ENCODE measurements at regions of chr4 and their contacts with region 1.

Region 1: GRCh38 chr4:82373816-82374625 is at the start of gene HNRNPD:
- DNase-seq: peak; percentile 76 to 99 (median 91)
- ATAC-seq: peak; percentile 83
- H3K4me3 ChIP-seq: peak within 1 kb of the TSS; percentile 94 to 98
- H3K4me3 Mint-ChIP-seq: peak within 1 kb of the TSS; percentile 100
- H3K27ac ChIP-seq: peak within 1 kb of the TSS; percentile 87 to 99
- H3K27ac Mint-ChIP-seq: peak within 1 kb of the TSS; percentile 100
- H3K4me1 ChIP-seq: peaks cover 34% of the 10 kb centered on the region
- H3K4me1 Mint-ChIP-seq: peaks cover 51% of the 10 kb centered on the region
- H3K27me3 ChIP-seq: no peaks in the 10 kb centered on the region
- H3K27me3 Mint-ChIP-seq: no peaks in the 10 kb centered on the region
- CTCF ChIP-seq: no peak
- total RNA-seq, gene HNRNPD: 245 to 248 TPM

Region 2: GRCh38 chr4:81405894-81406401 is 968.1 kb before region 1 on chr4:
- CTCF ChIA-PET with region 1: no interaction called
- POLR2A ChIA-PET with region 1: no interaction called
- intact Hi-C with region 1: loop called in 1 of 2 experiments (anchors 5 kb)
- DNase-seq: peak in 5 of 9 experiments; percentile 27 to 86 (median 51)
- ATAC-seq: peak; percentile 87
- H3K4me3 ChIP-seq: no peak overlapping the region
- H3K4me3 Mint-ChIP-seq: peak overlapping the region; percentile 6
- H3K27ac ChIP-seq: no peak overlapping the region
- H3K27ac Mint-ChIP-seq: no peak overlapping the region
- H3K4me1 ChIP-seq: no peaks in the 10 kb centered on the region
- H3K4me1 Mint-ChIP-seq: peaks cover 6% of the 10 kb centered on the region
- H3K27me3 ChIP-seq: peaks cover 0 to 3% of the 10 kb centered on the region in 2 experiments
- H3K27me3 Mint-ChIP-seq: peaks cover 4% of the 10 kb centered on the region
- CTCF ChIP-seq: peak; percentile 98

Region 3: DNA sequence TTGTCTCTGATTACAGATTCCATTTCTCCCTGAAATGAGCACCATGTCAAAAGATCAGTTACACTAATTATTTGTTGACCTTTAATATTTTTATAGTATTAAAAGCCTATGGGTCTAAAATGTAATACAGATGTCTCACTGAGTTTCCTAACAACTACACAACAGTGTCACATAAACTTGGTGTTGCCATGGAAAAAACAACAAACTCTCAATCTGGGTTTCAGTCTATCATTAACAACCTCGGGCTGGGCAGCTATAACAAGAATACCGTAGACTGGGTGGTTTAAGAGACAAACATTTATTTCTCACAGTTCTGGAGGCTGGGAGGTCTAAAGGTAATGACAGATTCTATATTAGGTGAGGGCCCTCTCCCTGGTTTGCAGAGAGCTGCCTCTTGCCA is 407.3 kb before region 1 on chr4:
- CTCF ChIA-PET with region 1: no interaction called
- POLR2A ChIA-PET with region 1: no interaction called
- intact Hi-C with region 1: no loop called
- DNase-seq: no peak
- ATAC-seq: no peak
- H3K4me3 ChIP-seq: no peak overlapping the region
- H3K4me3 Mint-ChIP-seq: no peak overlapping the region
- H3K27ac ChIP-seq: no peak overlapping the region
- H3K27ac Mint-ChIP-seq: no peak overlapping the region
- H3K4me1 ChIP-seq: no peaks in the 10 kb centered on the region
- H3K4me1 Mint-ChIP-seq: peaks cover 3% of the 10 kb centered on the region
- H3K27me3 ChIP-seq: no peaks in the 10 kb centered on the region
- H3K27me3 Mint-ChIP-seq: no peaks in the 10 kb centered on the region
- CTCF ChIP-seq: no peak

Region 4: GRCh38 chr4:82360298-82361177 is 13.5 kb before region 1 on chr4:
- CTCF ChIA-PET with region 1: interaction called, 19 read pairs
- POLR2A ChIA-PET with region 1: interaction called, 6 read pairs
- intact Hi-C with region 1: loop called in 1 of 2 experiments (anchors 1 kb)
- DNase-seq: peak in 2 of 9 experiments; percentile 51 to 59
- ATAC-seq: peak; percentile 75
- H3K4me3 ChIP-seq: no peak overlapping the region
- H3K4me3 Mint-ChIP-seq: peak overlapping the region; percentile 1
- H3K27ac ChIP-seq: peak overlapping the region in 1 of 2 experiments; percentile 21
- H3K27ac Mint-ChIP-seq: peak overlapping the region; percentile 15
- H3K4me1 ChIP-seq: peaks cover 92% of the 10 kb centered on the region
- H3K4me1 Mint-ChIP-seq: peaks cover 91% of the 10 kb centered on the region
- H3K27me3 ChIP-seq: no peaks in the 10 kb centered on the region
- H3K27me3 Mint-ChIP-seq: no peaks in the 10 kb centered on the region
- CTCF ChIP-seq: peak; percentile 56

Region 5: GRCh38 chr4:82462415-82462831 is 88.4 kb after region 1 on chr4:
- CTCF ChIA-PET with region 1: interaction called, 3 read pairs
- POLR2A ChIA-PET with region 1: no interaction called
- intact Hi-C with region 1: loop called in 1 of 2 experiments (anchors 1 kb)
- DNase-seq: peak; percentile 68 to 88 (median 84)
- ATAC-seq: peak; percentile 98
- H3K4me3 ChIP-seq: no peak overlapping the region
- H3K4me3 Mint-ChIP-seq: no peak overlapping the region
- H3K27ac ChIP-seq: no peak overlapping the region
- H3K27ac Mint-ChIP-seq: peak overlapping the region; percentile 20
- H3K4me1 ChIP-seq: peaks cover 3% of the 10 kb centered on the region
- H3K4me1 Mint-ChIP-seq: peaks cover 3% of the 10 kb centered on the region
- H3K27me3 ChIP-seq: no peaks in the 10 kb centered on the region
- H3K27me3 Mint-ChIP-seq: no peaks in the 10 kb centered on the region
- CTCF ChIP-seq: peak; percentile 79

Region 6: DNA sequence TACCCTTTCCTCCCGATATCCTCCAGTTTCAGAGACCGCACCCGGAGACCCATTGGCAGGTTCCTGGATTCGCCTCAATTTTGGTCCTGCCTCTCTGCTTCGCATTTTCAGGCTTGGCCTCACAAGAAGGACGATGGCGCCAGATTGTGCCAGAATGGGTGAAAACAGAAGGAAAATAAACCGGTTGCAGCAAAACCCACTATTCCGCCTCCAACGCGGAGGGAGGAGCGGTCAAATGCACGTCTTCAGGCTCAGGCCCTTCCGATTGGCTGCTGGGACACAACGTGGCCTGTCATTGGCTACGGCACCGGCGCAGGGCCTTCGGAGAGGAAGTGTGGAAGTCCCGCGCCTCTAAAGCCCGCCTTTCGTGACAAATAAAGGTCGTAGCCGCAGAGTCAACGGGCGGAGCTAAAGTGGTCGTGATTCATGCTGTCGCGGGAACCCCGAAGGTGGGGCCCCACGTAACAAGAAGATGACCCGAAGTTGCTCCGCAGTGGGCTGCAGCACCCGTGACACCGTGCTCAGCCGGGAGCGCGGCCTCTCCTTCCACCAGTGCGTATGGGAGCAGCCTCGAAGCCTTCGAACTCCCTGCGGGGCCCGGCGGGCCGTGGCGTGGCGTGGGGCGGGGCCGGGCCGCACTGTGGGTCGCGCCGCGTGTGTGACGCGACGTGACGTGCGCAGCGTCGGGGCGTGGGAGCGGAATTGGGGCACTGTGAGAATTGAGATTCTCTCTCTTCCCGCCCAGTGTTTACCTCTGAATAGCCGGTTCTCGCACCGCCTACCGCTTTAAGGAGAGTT is 526.5 kb after region 1 on chr4 and contains the start of gene THAP9:
- CTCF ChIA-PET with region 1: no interaction called
- POLR2A ChIA-PET with region 1: no interaction called
- intact Hi-C with region 1: loop called in 1 of 2 experiments (anchors 1 kb)
- DNase-seq: peak; percentile 95 to 100 (median 97)
- ATAC-seq: peak; percentile 88
- H3K4me3 ChIP-seq: peak within 1 kb of the TSS; percentile 73 to 84
- H3K4me3 Mint-ChIP-seq: no peak within 1 kb of the TSS
- H3K27ac ChIP-seq: peak within 1 kb of the TSS; percentile 93 to 99
- H3K27ac Mint-ChIP-seq: no peak within 1 kb of the TSS
- H3K4me1 ChIP-seq: peaks cover 30% of the 10 kb centered on the region
- H3K4me1 Mint-ChIP-seq: peaks cover 21% of the 10 kb centered on the region
- H3K27me3 ChIP-seq: no peaks in the 10 kb centered on the region
- H3K27me3 Mint-ChIP-seq: no peaks in the 10 kb centered on the region
- CTCF ChIP-seq: no peak
- total RNA-seq, gene THAP9: 5.2 to 7.3 TPM

Region 7: GRCh38 chr4:83034630-83035494 is 660.8 kb after region 1 on chr4 and contains the start of gene COPS4:
- CTCF ChIA-PET with region 1: no interaction called
- POLR2A ChIA-PET with region 1: interaction called, 5 read pairs
- intact Hi-C with region 1: loop called (anchors 1 to 2 kb)
- DNase-seq: peak; percentile 87 to 100 (median 94)
- ATAC-seq: peak; percentile 98
- H3K4me3 ChIP-seq: peak within 1 kb of the TSS; percentile 73 to 90
- H3K4me3 Mint-ChIP-seq: peak within 1 kb of the TSS; percentile 99
- H3K27ac ChIP-seq: peak within 1 kb of the TSS; percentile 76 to 92
- H3K27ac Mint-ChIP-seq: peak within 1 kb of the TSS; percentile 99
- H3K4me1 ChIP-seq: peaks cover 16% of the 10 kb centered on the region
- H3K4me1 Mint-ChIP-seq: peaks cover 41% of the 10 kb centered on the region
- H3K27me3 ChIP-seq: no peaks in the 10 kb centered on the region
- H3K27me3 Mint-ChIP-seq: no peaks in the 10 kb centered on the region
- CTCF ChIP-seq: peak; percentile 51
- total RNA-seq, gene COPS4: 32.2 to 35.2 TPM

Region 8: DNA sequence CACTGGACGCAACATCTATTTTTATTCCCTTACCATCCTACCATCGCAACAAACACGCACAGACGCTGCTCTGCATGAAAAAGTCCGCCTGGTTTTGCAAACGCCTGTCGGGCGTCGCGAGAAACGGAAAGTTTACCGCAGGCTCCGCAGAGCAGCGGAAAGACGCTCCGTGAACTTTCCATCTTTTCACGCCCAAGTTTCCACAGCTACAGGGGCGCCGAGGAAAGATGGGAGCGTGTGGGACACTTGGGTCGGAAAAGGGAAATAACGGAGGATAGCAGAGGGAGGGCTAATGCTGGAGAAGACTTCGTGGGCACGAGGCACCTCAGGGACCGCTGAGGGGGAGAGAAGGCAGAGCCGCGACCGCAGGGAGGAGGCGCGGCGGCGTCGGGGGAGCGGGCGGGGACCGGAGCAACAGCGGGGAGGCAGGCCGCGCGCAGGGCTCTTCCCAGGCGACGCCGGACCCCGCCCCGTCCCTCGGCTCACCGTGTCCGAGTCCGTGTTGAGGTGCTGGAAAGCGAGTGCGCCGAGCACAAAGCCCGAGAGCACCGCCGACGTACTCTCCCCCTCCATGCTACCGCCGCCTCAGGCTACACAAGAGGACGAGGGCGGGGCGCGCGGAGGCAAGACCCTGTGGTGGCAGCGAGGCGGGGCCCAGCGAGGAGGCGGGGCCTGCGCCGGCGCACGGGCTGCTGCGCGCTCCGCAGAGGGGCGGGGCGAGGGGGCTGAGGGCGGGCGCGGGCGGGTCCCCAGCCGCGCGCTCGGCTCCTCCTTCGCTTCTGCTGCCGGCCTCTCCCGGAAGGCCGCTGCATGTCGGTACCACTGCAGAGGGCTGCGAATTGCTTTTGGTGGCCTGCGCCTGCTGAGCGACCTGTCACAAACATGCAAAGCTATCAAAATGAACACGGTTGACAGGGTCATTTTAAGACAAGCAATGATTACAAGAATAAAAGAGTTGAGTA is 1110.8 kb after region 1 on chr4 and contains the start of gene ABRAXAS1:
- CTCF ChIA-PET with region 1: no interaction called
- POLR2A ChIA-PET with region 1: no interaction called
- intact Hi-C with region 1: loop called in 1 of 2 experiments (anchors 10 kb)
- DNase-seq: peak; percentile 89 to 97 (median 94)
- ATAC-seq: peak; percentile 95
- H3K4me3 ChIP-seq: peak within 1 kb of the TSS; percentile 77 to 81
- H3K4me3 Mint-ChIP-seq: peak within 1 kb of the TSS; percentile 96
- H3K27ac ChIP-seq: peak within 1 kb of the TSS; percentile 71 to 72
- H3K27ac Mint-ChIP-seq: peak within 1 kb of the TSS; percentile 96
- H3K4me1 ChIP-seq: peaks cover 10% of the 10 kb centered on the region
- H3K4me1 Mint-ChIP-seq: peaks cover 35% of the 10 kb centered on the region
- H3K27me3 ChIP-seq: no peaks in the 10 kb centered on the region
- H3K27me3 Mint-ChIP-seq: no peaks in the 10 kb centered on the region
- CTCF ChIP-seq: no peak
- total RNA-seq, gene ABRAXAS1: 13.9 to 17.2 TPM